ENCODE measurements at regions of chr3 and their contacts with region 1.

Region 1: DNA sequence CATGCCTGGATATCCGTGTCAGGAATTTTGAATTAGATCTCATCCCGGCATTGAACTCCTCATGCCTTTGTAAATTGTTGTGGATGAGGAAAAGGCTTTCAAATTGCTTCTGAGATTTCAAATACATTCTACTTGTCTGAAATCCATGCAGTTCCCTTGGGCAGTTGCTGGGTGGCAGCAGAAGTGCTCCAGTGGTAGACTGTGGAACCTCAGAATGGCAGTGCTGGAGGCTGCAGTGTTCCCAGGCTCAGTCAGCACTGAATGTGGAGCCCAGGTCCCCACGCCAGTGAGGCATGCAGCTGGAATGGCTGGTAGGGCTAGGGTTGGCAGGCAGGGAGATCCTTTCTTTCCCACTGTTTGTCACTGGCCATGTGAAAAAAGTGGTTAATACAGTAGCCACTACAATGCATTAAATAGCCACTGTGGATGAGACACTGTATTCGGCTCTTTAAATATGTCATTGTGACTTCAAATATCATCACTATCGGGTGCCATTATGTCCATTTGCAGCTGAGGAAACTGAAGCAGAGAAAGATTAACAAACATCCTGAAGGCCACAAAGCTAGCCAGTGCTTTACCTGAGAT is 98.6 kb downstream of the TPRG1 start:
- DNase-seq: peak; percentile 18 to 34 (median 29)
- H3K4me3 ChIP-seq: no peak overlapping the region
- H3K4me3 Mint-ChIP-seq: no peak overlapping the region
- H3K27ac ChIP-seq: no peak overlapping the region
- H3K27ac Mint-ChIP-seq: no peak overlapping the region
- H3K4me1 ChIP-seq: peaks cover 10% of the 10 kb centered on the region
- H3K4me1 Mint-ChIP-seq: peaks cover 7 to 15% (median 11%) of the 10 kb centered on the region in 4 donors
- H3K27me3 ChIP-seq: no peaks in the 10 kb centered on the region
- H3K27me3 Mint-ChIP-seq: no peaks in the 10 kb centered on the region

Region 2: DNA sequence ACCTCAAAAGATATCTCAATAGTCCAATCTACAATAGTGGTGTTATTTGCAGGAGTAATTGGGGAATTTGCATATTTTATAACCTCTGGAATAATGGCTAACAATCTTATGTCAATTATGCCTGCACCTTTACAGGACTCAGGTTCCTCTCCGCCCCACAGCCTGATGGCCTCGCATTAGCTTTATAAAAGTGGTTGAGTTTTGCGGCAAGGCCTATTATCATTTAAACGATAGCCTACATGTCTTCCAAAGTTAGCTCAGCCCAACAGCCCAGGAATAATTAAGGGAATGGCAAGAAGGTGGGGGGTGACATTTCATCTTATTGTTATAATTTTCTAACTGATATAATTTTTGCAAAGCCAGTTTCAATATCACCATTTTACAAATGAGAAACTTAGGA is 1804.8 kb before region 1 on chr3:
- CTCF ChIA-PET with region 1: no interaction called
- POLR2A ChIA-PET with region 1: no interaction called
- intact Hi-C with region 1: no loop called
- DNase-seq: no peak
- H3K4me3 ChIP-seq: no peak overlapping the region
- H3K4me3 Mint-ChIP-seq: no peak overlapping the region
- H3K27ac ChIP-seq: no peak overlapping the region
- H3K27ac Mint-ChIP-seq: no peak overlapping the region
- H3K4me1 ChIP-seq: no peaks in the 10 kb centered on the region
- H3K4me1 Mint-ChIP-seq: no peaks in the 10 kb centered on the region
- H3K27me3 ChIP-seq: no peaks in the 10 kb centered on the region
- H3K27me3 Mint-ChIP-seq: peaks cover 13 to 17% of the 10 kb centered on the region in 2 donors

Region 3: GRCh38 chr3:189132231-189132707 is 138.1 kb before region 1 on chr3:
- CTCF ChIA-PET with region 1: no interaction called
- POLR2A ChIA-PET with region 1: no interaction called
- intact Hi-C with region 1: no loop called
- DNase-seq: peak; percentile 70 to 93 (median 77)
- H3K4me3 ChIP-seq: peak overlapping the region in 1 of 2 donors; percentile 5
- H3K4me3 Mint-ChIP-seq: peak overlapping the region; percentile 64 to 91 (median 78)
- H3K27ac ChIP-seq: peak overlapping the region; percentile 62
- H3K27ac Mint-ChIP-seq: peak overlapping the region; percentile 87 to 98 (median 94)
- H3K4me1 ChIP-seq: peaks cover 30% of the 10 kb centered on the region
- H3K4me1 Mint-ChIP-seq: peaks cover 25 to 51% (median 39%) of the 10 kb centered on the region in 4 donors
- H3K27me3 ChIP-seq: no peaks in the 10 kb centered on the region
- H3K27me3 Mint-ChIP-seq: no peaks in the 10 kb centered on the region

Region 4: GRCh38 chr3:189324538-189325138 is 54.3 kb after region 1 on chr3:
- CTCF ChIA-PET with region 1: interaction called, 15 read pairs
- POLR2A ChIA-PET with region 1: interaction called, 4 read pairs
- intact Hi-C with region 1: loop called (anchors 2 kb)
- DNase-seq: peak; percentile 89 to 94 (median 93)
- H3K4me3 ChIP-seq: peak overlapping the region in 1 of 2 donors; percentile 6
- H3K4me3 Mint-ChIP-seq: peak overlapping the region; percentile 75 to 90 (median 84)
- H3K27ac ChIP-seq: peak overlapping the region; percentile 31
- H3K27ac Mint-ChIP-seq: peak overlapping the region; percentile 91 to 97 (median 96)
- H3K4me1 ChIP-seq: peaks cover 59% of the 10 kb centered on the region
- H3K4me1 Mint-ChIP-seq: peaks cover 43 to 66% (median 48%) of the 10 kb centered on the region in 4 donors
- H3K27me3 ChIP-seq: no peaks in the 10 kb centered on the region
- H3K27me3 Mint-ChIP-seq: no peaks in the 10 kb centered on the region

Region 5: GRCh38 chr3:189355481-189356201 is 85.3 kb after region 1 on chr3:
- CTCF ChIA-PET with region 1: interaction called, 20 read pairs
- POLR2A ChIA-PET with region 1: no interaction called
- intact Hi-C with region 1: no loop called
- DNase-seq: peak; percentile 69 to 79 (median 73)
- H3K4me3 ChIP-seq: no peak overlapping the region
- H3K4me3 Mint-ChIP-seq: peak overlapping the region; percentile 55 to 83 (median 74)
- H3K27ac ChIP-seq: peak overlapping the region; percentile 30
- H3K27ac Mint-ChIP-seq: peak overlapping the region; percentile 64 to 97 (median 93)
- H3K4me1 ChIP-seq: peaks cover 37% of the 10 kb centered on the region
- H3K4me1 Mint-ChIP-seq: peaks cover 23 to 34% (median 31%) of the 10 kb centered on the region in 4 donors
- H3K27me3 ChIP-seq: no peaks in the 10 kb centered on the region
- H3K27me3 Mint-ChIP-seq: no peaks in the 10 kb centered on the region

Region 6: GRCh38 chr3:189947948-189948723 is 677.8 kb after region 1 on chr3:
- CTCF ChIA-PET with region 1: interaction called, 73 read pairs
- POLR2A ChIA-PET with region 1: no interaction called
- intact Hi-C with region 1: loop called (anchors 1 kb)
- DNase-seq: peak in 3 of 5 donors; percentile 13 to 15 (median 15)
- H3K4me3 ChIP-seq: no peak overlapping the region
- H3K4me3 Mint-ChIP-seq: peak overlapping the region in 1 of 8 donors; percentile 30
- H3K27ac ChIP-seq: no peak overlapping the region
- H3K27ac Mint-ChIP-seq: no peak overlapping the region
- H3K4me1 ChIP-seq: peaks cover 6% of the 10 kb centered on the region
- H3K4me1 Mint-ChIP-seq: peaks cover 0 to 4% (median 4%) of the 10 kb centered on the region in 4 donors
- H3K27me3 ChIP-seq: no peaks in the 10 kb centered on the region
- H3K27me3 Mint-ChIP-seq: peaks cover 2 to 10% of the 10 kb centered on the region in 2 donors

Region 7: DNA sequence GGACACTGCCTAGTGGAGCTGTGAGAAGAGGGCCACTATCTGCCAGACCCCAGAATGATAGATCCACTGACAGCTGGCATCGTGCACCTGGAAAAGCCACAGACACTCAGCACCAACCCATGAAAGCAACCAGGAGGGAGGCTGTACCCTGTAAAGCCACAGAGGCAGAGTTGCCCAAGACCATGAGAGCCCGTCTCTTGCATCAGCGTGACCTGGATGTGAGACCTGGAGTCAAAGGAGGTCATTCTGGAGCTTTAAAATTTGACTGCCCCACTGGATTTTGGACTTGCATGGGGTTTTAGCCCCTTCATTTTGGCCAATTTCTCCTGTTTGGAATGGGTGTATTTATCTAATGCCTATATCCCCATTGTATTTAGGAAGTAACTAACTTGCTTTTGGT is 933.9 kb after region 1 on chr3:
- CTCF ChIA-PET with region 1: no interaction called
- POLR2A ChIA-PET with region 1: no interaction called
- intact Hi-C with region 1: loop called (anchors 5 kb)
- DNase-seq: no peak
- H3K4me3 ChIP-seq: no peak overlapping the region
- H3K4me3 Mint-ChIP-seq: no peak overlapping the region
- H3K27ac ChIP-seq: no peak overlapping the region
- H3K27ac Mint-ChIP-seq: no peak overlapping the region
- H3K4me1 ChIP-seq: no peaks in the 10 kb centered on the region
- H3K4me1 Mint-ChIP-seq: peaks cover 0 to 1% (median 0%) of the 10 kb centered on the region in 4 donors
- H3K27me3 ChIP-seq: no peaks in the 10 kb centered on the region
- H3K27me3 Mint-ChIP-seq: peaks cover 5 to 9% of the 10 kb centered on the region in 2 donors